Mammary epithelial cell (primary cell): ENCODE measurements at regions of chr22 and their contacts with region 1.

Region 1: GRCh38 chr22:24542641-24543040 is 12.3 kb downstream of the GUCD1 start:
- DNase-seq: no peak
- H3K4me3 ChIP-seq: no peak overlapping the region
- H3K27ac ChIP-seq: no peak overlapping the region
- H3K4me1 ChIP-seq: no peaks in the 10 kb centered on the region
- H3K27me3 ChIP-seq: no peaks in the 10 kb centered on the region
- CTCF ChIP-seq: no peak

Region 2: GRCh38 chr22:24482575-24482974 is 60.1 kb before region 1 on chr22:
- CTCF ChIA-PET with region 1: no interaction called
- dilution Hi-C with region 1: no loop called
- in situ Hi-C with region 1: no loop called
- intact Hi-C with region 1: no loop called
- DNase-seq: peak; percentile 77
- H3K4me3 ChIP-seq: no peak overlapping the region
- H3K27ac ChIP-seq: peak overlapping the region; percentile 56
- H3K4me1 ChIP-seq: peaks cover 54% of the 10 kb centered on the region
- H3K27me3 ChIP-seq: no peaks in the 10 kb centered on the region
- CTCF ChIP-seq: no peak

Region 3: GRCh38 chr22:24494528-24495364 is 47.9 kb before region 1 on chr22 and contains the start of gene UPB1:
- CTCF ChIA-PET with region 1: no interaction called
- dilution Hi-C with region 1: no loop called
- in situ Hi-C with region 1: loop called in 1 of 2 experiments (anchors 5 kb)
- intact Hi-C with region 1: no loop called
- DNase-seq: no peak
- H3K4me3 ChIP-seq: peak within 1 kb of the TSS in 2 of 3 experiments; percentile 8 to 39
- H3K27ac ChIP-seq: no peak within 1 kb of the TSS
- H3K4me1 ChIP-seq: peaks cover 7% of the 10 kb centered on the region
- H3K27me3 ChIP-seq: peaks cover 3% of the 10 kb centered on the region
- CTCF ChIP-seq: no peak
- total RNA-seq, gene UPB1: not detected